Mammary epithelial cell (primary cell): ENCODE measurements at regions of chr3 and their contacts with region 1.

Region 1: DNA sequence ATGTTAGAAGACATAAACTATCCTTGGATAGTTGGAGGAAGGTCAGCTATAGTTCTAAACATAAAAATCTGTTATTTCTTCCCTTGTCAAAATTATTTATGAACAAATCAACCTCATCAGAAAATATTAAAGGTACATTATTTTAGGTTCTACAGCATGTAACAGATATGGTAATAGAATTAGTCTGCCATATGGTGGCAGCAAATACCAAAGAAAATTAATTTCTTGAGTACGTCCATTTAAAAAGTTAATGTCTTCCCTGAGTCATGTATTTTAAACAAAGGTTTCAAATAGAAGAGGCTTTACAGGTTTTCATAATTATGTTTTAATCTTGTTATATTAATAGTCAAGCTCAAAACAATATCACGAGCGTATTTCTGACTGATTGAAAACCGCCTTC is 17.9 kb upstream of the ANKRD28 start:
- DNase-seq: peak; percentile 41
- H3K4me3 ChIP-seq: no peak overlapping the region
- H3K27ac ChIP-seq: no peak overlapping the region
- H3K4me1 ChIP-seq: peaks cover 9% of the 10 kb centered on the region
- H3K27me3 ChIP-seq: no peaks in the 10 kb centered on the region
- CTCF ChIP-seq: peak in 1 of 2 donors; percentile 31

Region 2: DNA sequence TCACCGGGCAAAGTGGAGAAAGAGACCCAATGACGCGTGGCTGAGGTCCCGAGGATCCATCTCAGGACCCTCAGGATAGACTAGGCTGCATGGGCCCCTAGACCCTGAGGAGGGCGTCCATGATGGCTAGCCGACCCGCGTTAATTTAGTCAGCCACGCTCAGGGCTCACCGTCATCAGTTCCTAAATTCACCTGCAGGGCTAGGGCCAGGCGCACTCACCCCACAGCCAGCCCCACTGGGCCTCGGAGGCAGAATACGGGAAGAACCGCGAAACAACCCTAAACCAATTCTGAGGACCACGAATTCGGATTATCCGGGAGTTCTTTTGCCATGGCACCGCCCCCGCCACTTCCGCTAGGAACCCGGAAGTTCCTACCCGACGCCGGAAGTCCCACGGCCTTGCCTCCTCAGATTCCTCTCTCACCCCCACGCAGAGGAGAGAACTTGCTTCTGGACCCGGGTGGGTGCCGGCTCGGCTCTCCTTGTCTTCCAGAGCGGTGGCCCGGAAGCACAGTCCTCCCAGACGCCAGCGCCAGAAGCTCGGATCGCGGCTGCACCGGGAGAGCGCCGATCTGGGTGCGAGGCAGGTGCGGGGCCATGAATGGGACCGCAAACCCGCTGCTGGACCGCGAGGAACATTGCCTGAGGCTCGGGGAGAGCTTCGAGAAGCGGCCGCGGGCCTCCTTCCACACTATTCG is 388.4 kb before region 1 on chr3 and contains the starts of genes EAF1 and METTL6:
- CTCF ChIA-PET with region 1: no interaction called
- dilution Hi-C with region 1: no loop called
- in situ Hi-C with region 1: no loop called
- intact Hi-C with region 1: loop called (anchors 10 kb)
- DNase-seq: peak; percentile 73
- H3K4me3 ChIP-seq: peak within 1 kb of the TSS; percentile 60 to 89 (median 77)
- H3K27ac ChIP-seq: peak within 1 kb of the TSS; percentile 87
- H3K4me1 ChIP-seq: peaks cover 16% of the 10 kb centered on the region
- H3K27me3 ChIP-seq: no peaks in the 10 kb centered on the region
- CTCF ChIP-seq: peak; percentile 4 to 22
- total RNA-seq, gene EAF1: 23.4 to 40.3 TPM
- total RNA-seq, gene METTL6: 19.7 to 21.5 TPM

Region 3: DNA sequence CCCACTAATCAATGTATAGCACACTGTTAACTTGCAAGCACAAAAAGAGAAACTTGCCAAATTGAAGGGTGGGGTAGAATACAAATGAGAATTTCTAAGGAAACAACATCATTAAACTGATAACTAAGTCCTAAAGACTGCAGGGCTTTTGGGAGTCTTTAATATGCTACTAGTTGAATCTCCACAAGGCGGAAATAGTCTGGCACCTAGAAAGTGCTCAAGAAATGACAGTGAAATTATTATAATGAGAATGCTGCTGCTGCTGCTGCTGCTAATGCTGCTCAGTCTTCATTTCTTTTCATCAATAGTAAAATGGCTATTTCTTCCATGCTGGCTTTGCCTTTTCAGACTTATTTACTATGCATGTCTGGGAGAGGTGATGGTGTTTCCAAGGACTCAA is 122.3 kb before region 1 on chr3:
- CTCF ChIA-PET with region 1: no interaction called
- dilution Hi-C with region 1: no loop called
- in situ Hi-C with region 1: no loop called
- intact Hi-C with region 1: loop called (anchors 5 kb)
- DNase-seq: no peak
- H3K4me3 ChIP-seq: no peak overlapping the region
- H3K27ac ChIP-seq: no peak overlapping the region
- H3K4me1 ChIP-seq: no peaks in the 10 kb centered on the region
- H3K27me3 ChIP-seq: no peaks in the 10 kb centered on the region
- CTCF ChIP-seq: no peak

Region 4: GRCh38 chr3:16033889-16034687 is 218.4 kb after region 1 on chr3:
- CTCF ChIA-PET with region 1: no interaction called
- dilution Hi-C with region 1: no loop called
- in situ Hi-C with region 1: no loop called
- intact Hi-C with region 1: loop called (anchors 5 kb)
- DNase-seq: peak; percentile 29
- H3K4me3 ChIP-seq: no peak overlapping the region
- H3K27ac ChIP-seq: peak overlapping the region; percentile 10
- H3K4me1 ChIP-seq: peaks cover 15% of the 10 kb centered on the region
- H3K27me3 ChIP-seq: no peaks in the 10 kb centered on the region
- CTCF ChIP-seq: no peak

Region 5: GRCh38 chr3:16112910-16113504 is 297.3 kb after region 1 on chr3:
- CTCF ChIA-PET with region 1: no interaction called
- dilution Hi-C with region 1: no loop called
- in situ Hi-C with region 1: no loop called
- intact Hi-C with region 1: no loop called
- DNase-seq: peak; percentile 21
- H3K4me3 ChIP-seq: no peak overlapping the region
- H3K27ac ChIP-seq: no peak overlapping the region
- H3K4me1 ChIP-seq: no peaks in the 10 kb centered on the region
- H3K27me3 ChIP-seq: no peaks in the 10 kb centered on the region
- CTCF ChIP-seq: no peak

Region 6: GRCh38 chr3:16177962-16178627 is 362.4 kb after region 1 on chr3:
- CTCF ChIA-PET with region 1: no interaction called
- dilution Hi-C with region 1: no loop called
- in situ Hi-C with region 1: no loop called
- intact Hi-C with region 1: loop called (anchors 1 kb)
- DNase-seq: peak; percentile 62
- H3K4me3 ChIP-seq: no peak overlapping the region
- H3K27ac ChIP-seq: no peak overlapping the region
- H3K4me1 ChIP-seq: peaks cover 5% of the 10 kb centered on the region
- H3K27me3 ChIP-seq: peaks cover 4% of the 10 kb centered on the region
- CTCF ChIP-seq: peak; percentile 93 to 99